RWPE1 (cell line): ENCODE measurements at regions of chr16 and their contacts with region 1.

Region 1: GRCh38 chr16:57591086-57591869 is 37.2 kb upstream of the ADGRG1 start:
- DNase-seq: peak; percentile 92
- H3K27ac ChIP-seq: peak overlapping the region; percentile 80
- CTCF ChIP-seq: peak; percentile 73

Region 2: GRCh38 chr16:57576429-57576870 is 14.8 kb before region 1 on chr16:
- CTCF ChIA-PET with region 1: interaction called, 12 read pairs
- POLR2A ChIA-PET with region 1: no interaction called
- DNase-seq: peak; percentile 66
- H3K27ac ChIP-seq: no peak overlapping the region
- CTCF ChIP-seq: peak; percentile 97